Stomach (tissue), 19 donors: ENCODE measurements at regions of chr4 and their contacts with region 1.

Region 1: DNA sequence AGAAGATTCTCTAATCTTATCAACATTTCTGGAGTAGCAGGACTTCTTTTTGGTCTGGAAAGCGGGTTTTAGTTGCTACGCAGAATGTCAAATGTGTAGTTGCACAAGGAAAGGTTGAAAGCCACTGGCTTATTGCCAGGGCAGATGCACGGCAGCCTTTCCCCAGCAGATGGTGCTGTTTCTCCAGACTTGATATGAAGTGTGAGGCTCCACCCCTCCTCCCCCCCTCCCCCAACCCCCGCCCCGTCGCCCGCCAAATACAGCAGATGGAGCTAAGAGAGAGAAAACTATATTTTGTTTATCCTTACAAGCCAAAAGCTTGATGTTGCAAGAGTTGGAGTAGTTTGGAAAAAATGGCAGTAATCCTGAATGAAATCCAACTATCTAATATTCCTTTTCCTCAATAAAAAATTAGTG is 32.0 kb downstream of the ENOPH1 start:
- DNase-seq: peak; percentile 90 to 94
- H3K4me3 ChIP-seq: no peak overlapping the region
- H3K27ac ChIP-seq: peak overlapping the region in 1 of 5 donors; percentile 50
- H3K4me1 ChIP-seq: peaks cover 0 to 12% (median 4%) of the 10 kb centered on the region in 4 donors
- H3K27me3 ChIP-seq: no peaks in the 10 kb centered on the region
- CTCF ChIP-seq: peak in 5 of 7 experiments; percentile 20 to 95 (median 92)
- EP300 ChIP-seq: no peak
- POLR2A ChIP-seq: no peak

Region 2: DNA sequence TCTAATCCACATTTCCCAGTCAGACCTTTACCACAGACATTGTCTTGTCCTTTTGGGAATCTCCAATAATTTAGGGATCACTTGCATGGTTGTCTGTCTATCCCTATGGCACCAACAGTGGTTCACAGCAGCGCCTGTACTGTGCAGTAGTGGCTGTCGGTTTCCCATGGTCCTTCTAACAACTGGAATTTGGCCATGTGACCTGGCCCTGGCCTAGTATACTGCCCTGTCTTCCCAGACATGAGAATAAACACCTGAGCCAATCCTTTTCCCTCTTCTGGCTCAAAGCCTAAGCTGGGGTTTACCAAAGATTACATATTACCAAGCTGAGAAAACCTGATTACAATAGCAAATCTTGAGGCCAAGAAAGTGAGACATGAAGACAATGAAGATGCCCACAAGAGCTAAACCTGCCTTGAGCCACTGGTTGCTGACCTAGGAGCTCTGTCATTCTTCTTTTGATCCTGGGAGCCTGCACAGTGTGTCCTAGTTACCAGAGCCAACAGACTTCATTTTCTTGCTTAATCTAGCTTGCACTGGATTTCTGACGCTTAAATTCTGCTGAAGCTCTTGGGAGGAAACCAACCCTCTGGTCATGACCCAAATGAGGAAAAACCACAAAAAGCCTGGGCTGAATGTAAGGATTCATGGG is 244.1 kb after region 1 on chr4:
- intact Hi-C with region 1: no loop called
- DNase-seq: peak in 1 of 2 donors; percentile 32
- H3K4me3 ChIP-seq: no peak overlapping the region
- H3K27ac ChIP-seq: peak overlapping the region in 1 of 5 donors; percentile 15
- H3K4me1 ChIP-seq: peaks cover 0 to 15% (median 10%) of the 10 kb centered on the region in 4 donors
- H3K27me3 ChIP-seq: no peaks in the 10 kb centered on the region
- CTCF ChIP-seq: no peak
- EP300 ChIP-seq: no peak
- POLR2A ChIP-seq: no peak

Region 3: GRCh38 chr4:82739316-82740179 is 277.1 kb after region 1 on chr4:
- intact Hi-C with region 1: loop called (anchors 10 kb)
- DNase-seq: peak; percentile 79 to 83
- H3K4me3 ChIP-seq: no peak overlapping the region
- H3K27ac ChIP-seq: no peak overlapping the region
- H3K4me1 ChIP-seq: no peaks in the 10 kb centered on the region
- H3K27me3 ChIP-seq: no peaks in the 10 kb centered on the region
- CTCF ChIP-seq: peak in 5 of 7 experiments; percentile 77 to 98 (median 92)
- EP300 ChIP-seq: no peak
- POLR2A ChIP-seq: no peak

Region 4: GRCh38 chr4:82801910-82802521 is 339.6 kb after region 1 on chr4:
- intact Hi-C with region 1: loop called (anchors 10 kb)
- DNase-seq: peak; percentile 43 to 64
- H3K4me3 ChIP-seq: no peak overlapping the region
- H3K27ac ChIP-seq: no peak overlapping the region
- H3K4me1 ChIP-seq: peaks cover 7 to 28% (median 25%) of the 10 kb centered on the region in 4 donors
- H3K27me3 ChIP-seq: peaks cover 0 to 27% (median 16%) of the 10 kb centered on the region in 3 donors
- CTCF ChIP-seq: peak in 5 of 7 experiments; percentile 9 to 41 (median 26)
- EP300 ChIP-seq: no peak
- POLR2A ChIP-seq: no peak